Activated naive CD4-positive, alpha-beta T cell treated with anti-CD3 and anti-CD28 coated beads for 36 hours (primary cell): ENCODE measurements at regions of chr14 and their contacts with region 1.

Region 1: DNA sequence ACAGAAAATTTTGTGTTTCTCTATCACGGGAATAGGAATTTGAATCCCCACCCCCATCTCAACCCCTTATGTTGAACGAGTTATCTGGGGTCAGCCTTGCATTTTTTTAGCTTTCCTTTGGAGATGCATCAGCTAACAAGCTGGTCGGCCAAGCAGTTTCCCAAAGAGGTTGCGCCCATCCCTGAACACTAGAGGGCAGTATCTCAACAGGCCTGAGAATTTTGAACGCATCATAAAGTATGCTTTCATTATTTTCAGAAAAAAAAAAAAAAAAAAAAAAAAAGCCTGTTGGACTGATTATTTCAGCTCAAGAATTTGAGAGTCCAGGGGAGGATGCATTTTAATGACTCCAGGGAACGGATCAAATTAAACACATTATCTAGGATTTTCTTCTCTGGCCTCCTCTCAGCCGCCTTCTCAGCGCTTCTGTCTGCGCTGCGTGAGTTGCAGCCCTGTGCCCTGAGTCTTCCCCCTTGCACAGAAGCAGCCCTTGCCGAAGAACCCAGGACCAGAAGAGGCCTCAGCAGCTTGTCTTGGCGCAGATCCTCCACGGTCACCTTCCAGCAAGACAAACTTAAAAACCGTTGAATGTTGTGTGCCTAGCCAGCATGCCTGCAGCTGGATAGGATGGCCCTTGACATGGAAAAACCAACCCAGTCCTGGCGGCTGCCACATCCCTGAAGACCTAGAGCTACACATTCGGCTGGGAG is 76.6 kb upstream of the GZMB start:
- DNase-seq: peak; percentile 77
- H3K4me3 Mint-ChIP-seq: no peak overlapping the region
- H3K27ac Mint-ChIP-seq: no peak overlapping the region
- H3K4me1 Mint-ChIP-seq: no peaks in the 10 kb centered on the region
- H3K27me3 Mint-ChIP-seq: no peaks in the 10 kb centered on the region

Region 2: GRCh38 chr14:24605435-24606190 is 104.9 kb before region 1 on chr14:
- CTCF ChIA-PET with region 1: interaction called, 10 read pairs
- intact Hi-C with region 1: no loop called
- DNase-seq: peak; percentile 85
- H3K4me3 Mint-ChIP-seq: peak overlapping the region; percentile 76
- H3K27ac Mint-ChIP-seq: peak overlapping the region; percentile 76
- H3K4me1 Mint-ChIP-seq: peaks cover 31% of the 10 kb centered on the region
- H3K27me3 Mint-ChIP-seq: no peaks in the 10 kb centered on the region

Region 3: DNA sequence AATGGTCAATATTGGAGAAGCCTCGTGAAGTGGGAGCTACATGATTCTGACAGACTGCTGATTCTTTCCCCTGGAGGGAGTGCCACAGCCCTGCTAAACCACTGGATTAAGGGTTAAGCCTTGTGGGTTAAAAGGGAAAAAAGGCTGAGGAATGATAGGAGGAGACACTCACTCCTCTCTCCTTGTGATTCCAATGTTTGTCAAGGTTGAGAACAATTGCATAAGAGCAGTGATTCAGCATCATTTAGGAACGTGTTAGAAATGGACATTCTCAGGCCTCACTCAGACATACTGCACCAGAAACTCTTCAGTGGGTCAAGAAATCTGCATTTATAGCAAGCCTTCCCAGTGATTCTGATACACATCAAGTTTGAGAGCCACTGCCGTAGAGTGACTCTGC is 11.2 kb after region 1 on chr14:
- CTCF ChIA-PET with region 1: interaction called, 13 read pairs
- intact Hi-C with region 1: no loop called
- DNase-seq: no peak
- H3K4me3 Mint-ChIP-seq: no peak overlapping the region
- H3K27ac Mint-ChIP-seq: no peak overlapping the region
- H3K4me1 Mint-ChIP-seq: no peaks in the 10 kb centered on the region
- H3K27me3 Mint-ChIP-seq: peaks cover 13% of the 10 kb centered on the region

Region 4: GRCh38 chr14:24789378-24789884 is 78.9 kb after region 1 on chr14:
- CTCF ChIA-PET with region 1: interaction called, 11 read pairs
- intact Hi-C with region 1: no loop called
- DNase-seq: no peak
- H3K4me3 Mint-ChIP-seq: no peak overlapping the region
- H3K27ac Mint-ChIP-seq: no peak overlapping the region
- H3K4me1 Mint-ChIP-seq: no peaks in the 10 kb centered on the region
- H3K27me3 Mint-ChIP-seq: peaks cover 22% of the 10 kb centered on the region

Region 5: DNA sequence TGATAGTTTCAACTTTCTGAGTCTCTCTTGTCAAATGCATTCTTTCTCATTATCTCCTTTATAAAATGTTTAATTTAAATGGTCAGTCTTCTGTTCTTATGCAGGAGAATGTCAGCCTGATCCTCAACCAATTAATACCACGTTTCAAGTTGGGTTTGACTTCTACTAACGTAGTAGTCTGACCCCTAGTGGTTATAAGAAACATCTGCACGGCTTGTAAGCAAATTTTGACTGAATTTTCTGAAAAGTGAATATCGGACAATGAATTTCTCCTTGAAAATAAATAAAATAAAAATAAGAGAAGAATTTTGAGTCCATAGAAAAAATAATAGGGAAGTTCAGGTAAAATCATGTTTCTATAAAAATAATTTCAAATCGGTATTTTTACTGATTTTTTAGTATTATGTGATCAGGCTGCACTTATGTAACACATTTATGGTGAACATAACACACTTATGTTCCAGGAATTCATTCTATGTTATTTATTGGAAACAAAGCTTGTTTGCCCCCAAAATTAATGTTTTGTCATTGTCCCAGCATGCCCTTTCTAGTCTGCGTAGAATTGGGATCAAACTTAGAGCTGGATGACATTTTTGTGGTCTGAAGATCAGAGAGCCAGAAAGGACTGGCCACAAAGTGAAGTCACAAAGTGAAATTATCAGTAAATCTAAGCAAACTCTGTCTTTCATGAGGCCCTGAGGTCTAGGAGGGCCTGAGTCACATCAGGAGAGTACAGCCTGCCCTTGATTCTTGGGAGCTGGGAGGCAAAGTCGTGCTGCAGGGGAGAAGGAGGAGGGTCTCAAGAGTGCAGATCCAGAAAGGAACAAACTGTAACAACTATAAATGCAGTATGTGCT is 440.6 kb after region 1 on chr14:
- CTCF ChIA-PET with region 1: interaction called, 5 read pairs
- intact Hi-C with region 1: loop called (anchors 1 kb)
- DNase-seq: no peak
- H3K4me3 Mint-ChIP-seq: no peak overlapping the region
- H3K27ac Mint-ChIP-seq: no peak overlapping the region
- H3K4me1 Mint-ChIP-seq: no peaks in the 10 kb centered on the region
- H3K27me3 Mint-ChIP-seq: peaks cover 8% of the 10 kb centered on the region